Naive thymus-derived CD4-positive, alpha-beta T cell (primary cell): ENCODE measurements at regions of chr17 and their contacts with region 1.

Region 1: DNA sequence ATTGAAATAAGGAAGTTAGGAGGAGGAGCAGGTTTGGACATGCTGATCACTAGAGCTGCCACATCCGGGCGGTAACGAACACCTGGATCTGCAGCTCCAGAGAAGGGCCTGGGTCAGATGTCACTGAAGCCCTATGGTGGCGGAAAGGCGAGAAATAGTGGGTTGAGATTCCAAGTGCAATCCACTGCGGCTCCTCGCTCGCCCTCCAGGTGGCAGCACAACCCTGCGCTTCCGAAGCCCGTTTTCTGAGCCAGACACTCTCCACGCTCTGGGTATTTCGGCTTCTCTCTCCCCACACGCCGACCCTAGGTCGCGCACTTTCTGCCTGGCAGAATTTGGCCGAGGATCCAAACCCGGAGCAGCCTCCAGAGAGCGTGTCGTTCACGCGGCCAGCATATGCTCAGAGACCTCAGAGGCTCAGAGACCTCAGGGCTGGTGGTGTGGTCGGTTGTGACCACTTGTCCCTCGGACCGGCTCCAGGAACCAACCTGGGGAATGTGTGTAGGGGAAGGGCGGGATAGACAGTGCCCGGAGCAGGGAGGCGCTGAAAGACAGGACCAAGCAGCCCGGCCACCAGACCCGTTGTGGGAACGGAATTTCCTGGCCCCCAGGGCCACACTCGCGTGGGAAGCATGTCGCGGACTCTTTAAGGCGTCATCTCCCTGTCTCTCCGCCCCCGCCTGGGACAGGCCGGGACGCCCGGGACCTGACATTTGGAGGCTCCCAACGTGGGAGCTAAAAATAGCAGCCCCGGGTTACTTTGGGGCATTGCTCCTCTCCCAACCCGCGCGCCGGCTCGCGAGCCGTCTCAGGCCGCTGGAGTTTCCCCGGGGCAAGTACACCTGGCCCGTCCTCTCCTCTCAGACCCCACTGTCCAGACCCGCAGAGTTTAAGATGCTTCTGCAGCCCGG is 744 bp upstream of the SLC2A4 start:
- DNase-seq: peak; percentile 76 to 88 (median 85)
- ATAC-seq: peak; percentile 95
- H3K4me3 ChIP-seq: peak overlapping the region; percentile 66
- H3K4me3 Mint-ChIP-seq: peak overlapping the region; percentile 77 to 87 (median 84)
- H3K27ac ChIP-seq: no peak overlapping the region
- H3K27ac Mint-ChIP-seq: peak overlapping the region in 7 of 9 donors; percentile 6 to 88 (median 51)
- H3K4me1 ChIP-seq: peaks cover 11 to 23% of the 10 kb centered on the region in 2 donors
- H3K4me1 Mint-ChIP-seq: peaks cover 14 to 31% (median 21%) of the 10 kb centered on the region in 7 donors
- H3K27me3 ChIP-seq: no peaks in the 10 kb centered on the region
- H3K27me3 Mint-ChIP-seq: peaks cover 6 to 44% (median 17%) of the 10 kb centered on the region in 5 donors

Region 2: GRCh38 chr17:7239091-7240027 is 41.4 kb before region 1 on chr17 and contains the start of gene PHF23:
- CTCF ChIA-PET with region 1: no interaction called
- POLR2A ChIA-PET with region 1: no interaction called
- intact Hi-C with region 1: no loop called
- DNase-seq: peak; percentile 91 to 98 (median 97)
- ATAC-seq: peak; percentile 78
- H3K4me3 ChIP-seq: peak within 1 kb of the TSS; percentile 76
- H3K4me3 Mint-ChIP-seq: peak within 1 kb of the TSS; percentile 88 to 98 (median 95)
- H3K27ac ChIP-seq: peak within 1 kb of the TSS; percentile 92
- H3K27ac Mint-ChIP-seq: peak within 1 kb of the TSS; percentile 55 to 100 (median 95)
- H3K4me1 ChIP-seq: peaks cover 32 to 44% of the 10 kb centered on the region in 2 donors
- H3K4me1 Mint-ChIP-seq: peaks cover 38 to 67% (median 60%) of the 10 kb centered on the region in 7 donors
- H3K27me3 ChIP-seq: no peaks in the 10 kb centered on the region
- H3K27me3 Mint-ChIP-seq: peaks cover 0 to 7% (median 0%) of the 10 kb centered on the region in 5 donors
- total RNA-seq, gene PHF23: 12.3 to 58.7 (median 55.2) TPM

Region 3: GRCh38 chr17:7261172-7261927 is 19.4 kb before region 1 on chr17:
- CTCF ChIA-PET with region 1: no interaction called
- POLR2A ChIA-PET with region 1: no interaction called
- intact Hi-C with region 1: loop called in 1 of 2 experiments (anchors 1 kb)
- DNase-seq: peak in 1 of 9 donors; percentile 34
- ATAC-seq: peak; percentile 63
- H3K4me3 ChIP-seq: peak overlapping the region; percentile 59
- H3K4me3 Mint-ChIP-seq: peak overlapping the region; percentile 65 to 87 (median 76)
- H3K27ac ChIP-seq: peak overlapping the region; percentile 68
- H3K27ac Mint-ChIP-seq: peak overlapping the region in 8 of 9 donors; percentile 29 to 68 (median 56)
- H3K4me1 ChIP-seq: peaks cover 13 to 19% of the 10 kb centered on the region in 2 donors
- H3K4me1 Mint-ChIP-seq: peaks cover 18 to 35% (median 28%) of the 10 kb centered on the region in 7 donors
- H3K27me3 ChIP-seq: no peaks in the 10 kb centered on the region
- H3K27me3 Mint-ChIP-seq: peaks cover 0 to 32% (median 14%) of the 10 kb centered on the region in 5 donors

Region 4: GRCh38 chr17:7323731-7324437 is 43.1 kb after region 1 on chr17:
- CTCF ChIA-PET with region 1: interaction called, 5 read pairs
- POLR2A ChIA-PET with region 1: no interaction called
- intact Hi-C with region 1: loop called in 1 of 2 experiments (anchors 1 kb)
- DNase-seq: peak; percentile 41 to 79 (median 62)
- ATAC-seq: peak; percentile 56
- H3K4me3 ChIP-seq: no peak overlapping the region
- H3K4me3 Mint-ChIP-seq: no peak overlapping the region
- H3K27ac ChIP-seq: no peak overlapping the region
- H3K27ac Mint-ChIP-seq: peak overlapping the region in 2 of 9 donors; percentile 41 to 52
- H3K4me1 ChIP-seq: peaks cover 0 to 7% of the 10 kb centered on the region in 2 donors
- H3K4me1 Mint-ChIP-seq: peaks cover 9 to 34% (median 18%) of the 10 kb centered on the region in 7 donors
- H3K27me3 ChIP-seq: no peaks in the 10 kb centered on the region
- H3K27me3 Mint-ChIP-seq: no peaks in the 10 kb centered on the region

Region 5: GRCh38 chr17:7336240-7337175 is 55.7 kb after region 1 on chr17 and contains the start of gene ACAP1:
- CTCF ChIA-PET with region 1: interaction called, 18 read pairs
- POLR2A ChIA-PET with region 1: interaction called, 4 read pairs
- intact Hi-C with region 1: loop called in 1 of 2 experiments (anchors 2 kb)
- DNase-seq: peak; percentile 56 to 85 (median 82)
- ATAC-seq: peak; percentile 99
- H3K4me3 ChIP-seq: peak within 1 kb of the TSS; percentile 99
- H3K4me3 Mint-ChIP-seq: peak within 1 kb of the TSS; percentile 89 to 99 (median 94)
- H3K27ac ChIP-seq: peak within 1 kb of the TSS; percentile 81
- H3K27ac Mint-ChIP-seq: peak within 1 kb of the TSS; percentile 89 to 100 (median 95)
- H3K4me1 ChIP-seq: peaks cover 31 to 44% of the 10 kb centered on the region in 2 donors
- H3K4me1 Mint-ChIP-seq: peaks cover 49 to 76% (median 60%) of the 10 kb centered on the region in 7 donors
- H3K27me3 ChIP-seq: no peaks in the 10 kb centered on the region
- H3K27me3 Mint-ChIP-seq: no peaks in the 10 kb centered on the region
- total RNA-seq, gene ACAP1: 482 to 708 (median 599) TPM

Region 6: DNA sequence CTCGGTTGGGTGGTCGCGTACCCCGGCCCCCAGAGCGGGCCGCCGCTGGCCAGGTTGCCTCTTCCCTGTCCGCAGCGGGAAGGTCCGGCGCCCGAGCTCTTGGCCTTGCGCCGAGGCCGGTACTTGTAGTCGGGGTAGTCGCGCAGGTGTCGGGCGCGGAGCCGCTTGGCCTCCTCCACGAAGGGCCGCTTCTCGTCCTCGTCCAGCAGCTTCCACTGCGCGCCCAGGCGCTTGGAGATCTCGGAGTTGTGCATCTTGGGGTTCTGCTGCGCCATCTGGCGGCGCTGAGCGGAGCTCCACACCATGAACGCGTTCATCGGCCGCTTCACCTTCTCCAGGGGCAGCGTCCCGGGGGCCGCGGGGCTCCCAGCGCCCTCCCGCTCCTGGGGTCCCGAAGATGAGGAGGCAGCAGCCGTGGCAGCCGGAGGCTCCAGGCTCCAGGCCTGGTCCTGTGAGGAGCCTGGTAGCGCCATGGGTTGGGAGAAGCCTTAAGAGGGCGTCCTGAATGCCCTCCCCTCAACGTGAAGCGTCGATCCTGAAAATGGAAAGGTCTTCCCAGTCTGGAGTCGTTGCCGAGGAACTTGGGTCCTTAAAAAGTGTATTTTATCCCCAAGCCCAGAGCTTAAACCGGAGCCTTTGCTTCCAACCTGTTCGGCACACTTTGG is 308.6 kb after region 1 on chr17:
- CTCF ChIA-PET with region 1: no interaction called
- POLR2A ChIA-PET with region 1: no interaction called
- intact Hi-C with region 1: loop called in 1 of 2 experiments (anchors 1 kb)
- DNase-seq: peak; percentile 54 to 72 (median 63)
- ATAC-seq: peak; percentile 87
- H3K4me3 ChIP-seq: no peak overlapping the region
- H3K4me3 Mint-ChIP-seq: no peak overlapping the region
- H3K27ac ChIP-seq: no peak overlapping the region
- H3K27ac Mint-ChIP-seq: peak overlapping the region in 2 of 9 donors; percentile 13 to 38
- H3K4me1 ChIP-seq: peaks cover 8 to 11% of the 10 kb centered on the region in 2 donors
- H3K4me1 Mint-ChIP-seq: peaks cover 9 to 14% (median 13%) of the 10 kb centered on the region in 7 donors
- H3K27me3 ChIP-seq: no peaks in the 10 kb centered on the region
- H3K27me3 Mint-ChIP-seq: no peaks in the 10 kb centered on the region